Testis (tissue), 5 donors: ENCODE measurements at regions of chr2 and their contacts with region 1.

Region 1: GRCh38 chr2:37832590-37833197 is 92.4 kb upstream of the RMDN2 start:
- DNase-seq: peak; percentile 92
- H3K4me3 ChIP-seq: no peak overlapping the region
- H3K27ac ChIP-seq: no peak overlapping the region
- H3K4me1 ChIP-seq: peaks cover 17% of the 10 kb centered on the region
- H3K27me3 ChIP-seq: no peaks in the 10 kb centered on the region
- CTCF ChIP-seq: peak; percentile 70 to 79 (median 78)
- POLR2A ChIP-seq: no peak

Region 2: DNA sequence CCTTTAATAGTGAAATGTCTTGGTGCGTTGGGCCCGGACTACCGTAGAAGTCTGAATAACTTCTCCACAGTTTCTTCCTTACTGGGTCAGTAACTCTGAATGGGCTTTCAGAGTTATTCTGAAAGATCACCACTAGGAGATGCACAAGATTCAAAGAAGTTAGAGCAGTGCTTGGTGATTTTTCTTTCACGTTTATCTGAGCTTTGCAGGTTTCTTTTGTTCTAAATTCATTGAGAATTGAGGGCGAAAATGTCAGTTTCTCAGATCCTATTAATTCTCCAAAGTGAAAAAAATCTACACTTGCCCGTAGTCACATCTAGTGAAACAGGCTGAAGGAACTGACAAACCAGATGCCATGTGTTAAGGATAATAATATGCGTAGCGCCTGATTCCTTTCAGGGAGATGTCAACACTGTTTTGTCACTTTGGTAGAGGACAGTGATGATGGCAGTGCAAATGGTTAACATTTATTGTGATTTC is 418.2 kb before region 1 on chr2:
- intact Hi-C with region 1: loop called (anchors 10 kb)
- DNase-seq: no peak
- H3K4me3 ChIP-seq: no peak overlapping the region
- H3K27ac ChIP-seq: no peak overlapping the region
- H3K4me1 ChIP-seq: no peaks in the 10 kb centered on the region
- H3K27me3 ChIP-seq: no peaks in the 10 kb centered on the region
- CTCF ChIP-seq: peak; percentile 78 to 94 (median 83)
- POLR2A ChIP-seq: no peak